Activated B cell treated with CpG ODN at 0.5 μM for 24 hours (primary cell): ENCODE measurements at regions of chr2 and their contacts with region 1.

Region 1: DNA sequence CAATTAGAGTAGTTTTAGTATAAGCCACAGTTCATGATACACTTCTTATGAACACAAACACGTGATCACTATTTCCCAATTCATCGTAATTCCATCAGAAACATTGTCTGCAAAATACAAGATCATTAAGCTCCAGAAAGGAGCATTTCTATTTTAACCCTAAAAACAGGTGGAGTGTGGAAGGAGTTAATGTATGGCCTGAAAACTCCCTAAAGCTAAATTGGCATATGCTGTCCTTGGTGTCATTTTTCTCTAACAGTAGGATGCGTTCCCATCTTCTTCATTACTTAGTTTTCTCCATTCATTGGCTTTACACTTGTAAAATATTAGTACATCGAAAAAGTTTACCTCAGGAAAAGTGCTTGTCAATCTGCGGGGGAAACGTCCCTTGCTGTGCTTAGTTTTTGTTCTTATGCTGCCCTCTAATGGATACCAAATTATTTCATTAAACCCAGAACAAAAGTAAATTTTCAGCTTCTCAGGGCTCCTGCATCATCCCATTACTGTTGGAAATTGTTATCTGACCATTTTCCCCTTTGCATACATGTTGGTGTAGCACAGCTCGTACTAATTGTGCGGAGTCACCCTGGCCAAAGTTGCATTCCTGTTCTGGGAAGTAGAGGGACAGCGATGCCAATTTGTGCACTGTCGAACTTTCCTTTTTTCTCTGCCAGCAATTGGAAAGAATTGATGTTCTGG is 153.4 kb downstream of the GPD2 start:
- DNase-seq: no peak
- ATAC-seq: peak; percentile 54
- H3K4me3 Mint-ChIP-seq: no peak overlapping the region
- H3K27ac Mint-ChIP-seq: no peak overlapping the region
- H3K4me1 Mint-ChIP-seq: peaks cover 2% of the 10 kb centered on the region
- H3K27me3 Mint-ChIP-seq: no peaks in the 10 kb centered on the region
- CTCF ChIP-seq: no peak

Region 2: GRCh38 chr2:154623819-154624218 is 1965.7 kb before region 1 on chr2:
- CTCF ChIA-PET with region 1: no interaction called
- POLR2A ChIA-PET with region 1: no interaction called
- intact Hi-C with region 1: loop called (anchors 5 kb)
- DNase-seq: no peak
- ATAC-seq: no peak
- H3K4me3 Mint-ChIP-seq: no peak overlapping the region
- H3K27ac Mint-ChIP-seq: no peak overlapping the region
- H3K4me1 Mint-ChIP-seq: no peaks in the 10 kb centered on the region
- H3K27me3 Mint-ChIP-seq: no peaks in the 10 kb centered on the region
- CTCF ChIP-seq: no peak

Region 3: GRCh38 chr2:155377266-155377680 is 1212.3 kb before region 1 on chr2:
- CTCF ChIA-PET with region 1: interaction called, 16 read pairs
- POLR2A ChIA-PET with region 1: no interaction called
- intact Hi-C with region 1: loop called (anchors 1 kb)
- DNase-seq: no peak
- ATAC-seq: no peak
- H3K4me3 Mint-ChIP-seq: no peak overlapping the region
- H3K27ac Mint-ChIP-seq: no peak overlapping the region
- H3K4me1 Mint-ChIP-seq: peaks cover 2% of the 10 kb centered on the region
- H3K27me3 Mint-ChIP-seq: no peaks in the 10 kb centered on the region
- CTCF ChIP-seq: no peak

Region 4: GRCh38 chr2:156110890-156111289 is 478.6 kb before region 1 on chr2:
- CTCF ChIA-PET with region 1: no interaction called
- POLR2A ChIA-PET with region 1: interaction called, 5 read pairs
- intact Hi-C with region 1: loop called (anchors 2 kb)
- DNase-seq: peak; percentile 15
- ATAC-seq: peak; percentile 66
- H3K4me3 Mint-ChIP-seq: no peak overlapping the region
- H3K27ac Mint-ChIP-seq: no peak overlapping the region
- H3K4me1 Mint-ChIP-seq: peaks cover 2% of the 10 kb centered on the region
- H3K27me3 Mint-ChIP-seq: no peaks in the 10 kb centered on the region
- CTCF ChIP-seq: no peak

Region 5: GRCh38 chr2:156400706-156401678 is 188.5 kb before region 1 on chr2:
- CTCF ChIA-PET with region 1: interaction called, 4 read pairs
- POLR2A ChIA-PET with region 1: no interaction called
- intact Hi-C with region 1: loop called (anchors 1 kb)
- DNase-seq: peak; percentile 67
- ATAC-seq: peak; percentile 74
- H3K4me3 Mint-ChIP-seq: peak overlapping the region; percentile 96
- H3K27ac Mint-ChIP-seq: peak overlapping the region; percentile 99
- H3K4me1 Mint-ChIP-seq: peaks cover 29% of the 10 kb centered on the region
- H3K27me3 Mint-ChIP-seq: peaks cover 6% of the 10 kb centered on the region
- CTCF ChIP-seq: no peak

Region 6: DNA sequence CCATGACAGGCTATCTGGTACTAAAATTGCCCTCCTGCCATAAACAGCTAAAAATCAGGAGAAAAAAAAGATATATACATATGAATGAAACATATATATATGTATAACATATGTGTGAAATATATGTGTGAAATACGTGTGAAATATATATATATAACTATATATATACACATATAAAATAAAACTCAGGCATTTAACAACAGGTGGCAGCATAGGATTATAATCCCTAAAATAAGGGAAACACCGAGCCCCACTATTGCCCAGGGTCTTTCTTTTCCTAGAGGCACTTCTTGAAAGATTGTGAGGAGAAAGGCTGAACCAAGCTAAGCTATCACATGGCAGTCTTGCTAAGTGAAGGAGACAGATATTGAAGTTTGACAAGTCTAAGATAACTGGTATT is 920.2 kb after region 1 on chr2:
- CTCF ChIA-PET with region 1: no interaction called
- POLR2A ChIA-PET with region 1: no interaction called
- intact Hi-C with region 1: no loop called
- DNase-seq: no peak
- ATAC-seq: no peak
- H3K4me3 Mint-ChIP-seq: no peak overlapping the region
- H3K27ac Mint-ChIP-seq: no peak overlapping the region
- H3K4me1 Mint-ChIP-seq: peaks cover 6% of the 10 kb centered on the region
- H3K27me3 Mint-ChIP-seq: peaks cover 10% of the 10 kb centered on the region
- CTCF ChIP-seq: no peak